ENCODE measurements at regions of chr9 and their contacts with region 1.

Region 1: GRCh38 chr9:83334320-83334719 is 203.9 kb downstream of the FRMD3 start:
- DNase-seq: peak; percentile 89
- ATAC-seq: peak; percentile 94
- H3K4me3 Mint-ChIP-seq: no peak overlapping the region
- H3K27ac Mint-ChIP-seq: no peak overlapping the region
- H3K4me1 Mint-ChIP-seq: peaks cover 2% of the 10 kb centered on the region
- H3K27me3 Mint-ChIP-seq: no peaks in the 10 kb centered on the region

Region 2: GRCh38 chr9:83355024-83355444 is 20.7 kb after region 1 on chr9:
- CTCF ChIA-PET with region 1: interaction called, 12 read pairs
- POLR2A ChIA-PET with region 1: no interaction called
- intact Hi-C with region 1: no loop called
- DNase-seq: no peak
- ATAC-seq: no peak
- H3K4me3 Mint-ChIP-seq: no peak overlapping the region
- H3K27ac Mint-ChIP-seq: no peak overlapping the region
- H3K4me1 Mint-ChIP-seq: no peaks in the 10 kb centered on the region
- H3K27me3 Mint-ChIP-seq: no peaks in the 10 kb centered on the region

Region 3: DNA sequence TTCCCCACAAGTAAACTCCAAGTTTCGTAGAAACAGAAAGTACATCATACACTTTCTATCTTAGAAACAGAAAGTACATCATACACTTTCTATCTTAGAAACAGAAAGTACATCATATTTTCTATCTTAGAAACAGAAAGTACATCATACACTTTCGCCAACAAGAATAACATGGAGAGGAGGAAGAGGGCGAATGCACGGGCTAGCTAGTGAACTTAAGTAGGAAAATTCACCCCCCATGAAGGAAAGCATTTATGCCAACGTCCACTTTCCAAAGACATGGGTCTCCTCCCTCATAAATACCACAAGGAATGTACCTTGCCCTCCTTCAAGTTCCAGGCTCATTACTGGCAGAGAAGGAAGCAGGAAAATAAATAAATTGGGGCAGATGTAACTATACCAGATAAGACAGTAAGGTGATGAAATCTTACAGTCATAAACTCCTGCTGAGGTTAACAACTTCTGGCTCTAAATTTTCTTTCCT is 139.2 kb after region 1 on chr9:
- CTCF ChIA-PET with region 1: no interaction called
- POLR2A ChIA-PET with region 1: no interaction called
- intact Hi-C with region 1: loop called in 1 of 2 experiments (anchors 2 kb)
- DNase-seq: peak; percentile 17
- ATAC-seq: peak; percentile 83
- H3K4me3 Mint-ChIP-seq: peak overlapping the region; percentile 20
- H3K27ac Mint-ChIP-seq: peak overlapping the region; percentile 72
- H3K4me1 Mint-ChIP-seq: peaks cover 27% of the 10 kb centered on the region
- H3K27me3 Mint-ChIP-seq: peaks cover 9% of the 10 kb centered on the region

Region 4: GRCh38 chr9:83544002-83544698 is 209.8 kb after region 1 on chr9:
- CTCF ChIA-PET with region 1: interaction called, 64 read pairs
- POLR2A ChIA-PET with region 1: no interaction called
- intact Hi-C with region 1: loop called (anchors 1 kb)
- DNase-seq: peak; percentile 12
- ATAC-seq: peak; percentile 47
- H3K4me3 Mint-ChIP-seq: no peak overlapping the region
- H3K27ac Mint-ChIP-seq: no peak overlapping the region
- H3K4me1 Mint-ChIP-seq: peaks cover under 1% of the 10 kb centered on the region
- H3K27me3 Mint-ChIP-seq: peaks cover 15% of the 10 kb centered on the region

Region 5: GRCh38 chr9:83596896-83597504 is 262.7 kb after region 1 on chr9:
- CTCF ChIA-PET with region 1: interaction called, 49 read pairs
- POLR2A ChIA-PET with region 1: no interaction called
- intact Hi-C with region 1: loop called (anchors 1 kb)
- DNase-seq: peak; percentile 71
- ATAC-seq: no peak
- H3K4me3 Mint-ChIP-seq: no peak overlapping the region
- H3K27ac Mint-ChIP-seq: no peak overlapping the region
- H3K4me1 Mint-ChIP-seq: no peaks in the 10 kb centered on the region
- H3K27me3 Mint-ChIP-seq: no peaks in the 10 kb centered on the region

Region 6: DNA sequence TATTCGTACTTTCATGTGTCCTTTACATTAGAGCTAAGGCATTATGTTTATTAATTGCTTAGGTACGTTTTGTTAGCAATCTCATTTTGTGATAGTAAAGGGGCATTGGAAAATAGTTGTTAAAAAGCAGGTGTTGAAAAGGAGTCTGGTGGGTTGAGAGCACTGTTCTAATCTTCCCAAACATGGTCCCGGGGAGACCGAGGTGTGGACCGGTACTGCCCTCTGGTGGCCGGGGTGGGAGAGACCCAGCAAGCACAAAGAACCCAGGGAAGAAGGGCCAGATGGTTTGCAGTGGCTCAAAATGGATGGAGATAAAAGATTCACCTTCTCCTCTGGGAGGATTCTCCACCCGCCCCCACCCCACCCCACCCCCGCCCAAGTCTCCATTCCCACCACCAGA is 314.8 kb after region 1 on chr9:
- CTCF ChIA-PET with region 1: interaction called, 23 read pairs
- POLR2A ChIA-PET with region 1: no interaction called
- intact Hi-C with region 1: loop called in 1 of 2 experiments (anchors 1 kb)
- DNase-seq: peak; percentile 83
- ATAC-seq: peak; percentile 87
- H3K4me3 Mint-ChIP-seq: no peak overlapping the region
- H3K27ac Mint-ChIP-seq: no peak overlapping the region
- H3K4me1 Mint-ChIP-seq: peaks cover 5% of the 10 kb centered on the region
- H3K27me3 Mint-ChIP-seq: no peaks in the 10 kb centered on the region

Region 7: DNA sequence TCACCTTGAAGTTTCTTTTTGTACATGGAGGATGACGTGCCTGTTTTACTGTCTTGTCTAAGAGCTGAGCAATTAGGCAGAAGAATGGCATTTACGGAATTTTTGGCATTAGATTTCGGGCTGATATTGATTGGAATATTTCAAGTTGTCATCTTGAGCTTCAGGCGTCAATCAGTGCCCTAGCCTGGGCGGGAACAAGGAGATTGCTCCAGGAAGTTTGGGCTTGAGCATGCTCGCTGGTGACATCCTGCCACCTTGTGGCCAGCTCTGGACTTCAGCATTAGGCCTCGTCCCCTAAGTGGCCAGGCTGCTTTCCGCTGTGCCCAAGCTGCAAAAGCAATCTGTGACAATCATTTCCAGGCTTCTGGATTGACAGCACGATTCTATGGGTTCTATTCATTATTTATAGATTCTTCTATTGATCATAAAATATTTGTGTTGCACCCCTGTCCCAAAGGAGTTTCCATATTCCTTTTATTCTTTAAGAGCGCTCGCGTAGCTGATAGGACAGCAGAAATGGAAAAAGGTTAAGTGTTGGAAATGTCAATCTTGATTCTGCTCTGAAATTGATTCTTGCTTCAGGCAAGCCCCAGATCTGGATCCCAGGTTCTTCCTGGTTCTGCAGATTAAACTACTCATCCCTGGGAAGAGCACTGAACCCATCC is 926.9 kb after region 1 on chr9:
- CTCF ChIA-PET with region 1: interaction called, 4 read pairs
- POLR2A ChIA-PET with region 1: no interaction called
- intact Hi-C with region 1: loop called in 1 of 2 experiments (anchors 10 kb)
- DNase-seq: peak; percentile 77
- ATAC-seq: peak; percentile 82
- H3K4me3 Mint-ChIP-seq: no peak overlapping the region
- H3K27ac Mint-ChIP-seq: no peak overlapping the region
- H3K4me1 Mint-ChIP-seq: peaks cover 6% of the 10 kb centered on the region
- H3K27me3 Mint-ChIP-seq: peaks cover 8% of the 10 kb centered on the region

Measured in activated CD4-positive, alpha-beta T cell treated with anti-CD3 and anti-CD28 coated beads for 36 hours (primary cell).